Dendritic cell treated with granulocyte-macrophage colony-stimulating factor and Interleukin-4, amounts not matched to agents 40 ng/mL and 50 ng/mL, for 4 days (primary cell): ENCODE measurements at regions of chr12 and their contacts with region 1.

Region 1: GRCh38 chr12:67943226-67943892 is 45.9 kb upstream of the IFNG-AS1 start:
- H3K4me3 Mint-ChIP-seq: no peak overlapping the region
- H3K27ac Mint-ChIP-seq: no peak overlapping the region
- H3K4me1 Mint-ChIP-seq: no peaks in the 10 kb centered on the region
- H3K27me3 Mint-ChIP-seq: peaks cover 6% of the 10 kb centered on the region

Region 2: DNA sequence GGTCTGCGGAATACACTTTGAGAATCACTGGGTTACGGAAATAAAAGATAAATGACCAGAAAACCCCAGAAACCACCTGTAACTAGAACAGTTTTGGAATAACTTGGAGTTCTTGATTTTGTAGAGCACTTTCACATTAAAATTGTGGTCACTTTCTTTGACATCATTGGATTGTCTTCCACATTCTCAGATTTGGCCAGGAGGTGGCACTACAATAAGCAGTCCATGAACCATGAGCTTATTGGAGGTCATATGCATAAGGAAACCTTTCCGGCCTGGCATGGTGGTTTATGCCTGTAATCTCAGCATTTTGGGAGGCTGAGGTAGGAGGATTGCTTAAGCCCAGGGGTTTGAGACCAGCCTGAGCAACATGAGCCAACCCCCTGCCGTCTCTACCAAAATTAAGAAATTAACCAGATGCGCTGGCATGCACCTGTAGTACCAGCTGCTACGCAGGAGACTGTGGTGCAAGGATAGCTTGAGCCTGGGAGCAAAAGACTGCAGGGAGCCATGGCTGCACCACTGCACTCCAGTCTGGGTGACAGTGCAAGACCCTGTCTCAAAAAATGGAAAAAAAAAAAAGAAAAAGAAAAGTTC is 781.9 kb before region 1 on chr12:
- intact Hi-C with region 1: loop called (anchors 5 kb)
- H3K4me3 Mint-ChIP-seq: no peak overlapping the region
- H3K27ac Mint-ChIP-seq: no peak overlapping the region
- H3K4me1 Mint-ChIP-seq: no peaks in the 10 kb centered on the region
- H3K27me3 Mint-ChIP-seq: no peaks in the 10 kb centered on the region

Region 3: GRCh38 chr12:67355578-67356379 is 587.6 kb before region 1 on chr12:
- intact Hi-C with region 1: loop called (anchors 1 kb)
- H3K4me3 Mint-ChIP-seq: no peak overlapping the region
- H3K27ac Mint-ChIP-seq: no peak overlapping the region
- H3K4me1 Mint-ChIP-seq: peaks cover 7% of the 10 kb centered on the region
- H3K27me3 Mint-ChIP-seq: peaks cover 1% of the 10 kb centered on the region

Region 4: GRCh38 chr12:67441736-67442346 is 501.5 kb before region 1 on chr12:
- intact Hi-C with region 1: loop called (anchors 5 kb)
- H3K4me3 Mint-ChIP-seq: no peak overlapping the region
- H3K27ac Mint-ChIP-seq: no peak overlapping the region
- H3K4me1 Mint-ChIP-seq: peaks cover 13% of the 10 kb centered on the region
- H3K27me3 Mint-ChIP-seq: peaks cover 71% of the 10 kb centered on the region

Region 5: GRCh38 chr12:67648521-67649260 is 294.7 kb before region 1 on chr12 and contains the start of gene DYRK2:
- intact Hi-C with region 1: loop called (anchors 5 kb)
- H3K4me3 Mint-ChIP-seq: peak within 1 kb of the TSS; percentile 91
- H3K27ac Mint-ChIP-seq: peak within 1 kb of the TSS; percentile 86
- H3K4me1 Mint-ChIP-seq: peaks cover 40% of the 10 kb centered on the region
- H3K27me3 Mint-ChIP-seq: peaks cover 16% of the 10 kb centered on the region